ENCODE measurements at regions of chr20 and their contacts with region 1.

Region 1: GRCh38 chr20:32031007-32031958 is 20.8 kb upstream of the HCK start:
- DNase-seq: peak; percentile 87
- ATAC-seq: peak; percentile 93

Region 2: GRCh38 chr20:31859998-31860709 is 171.1 kb before region 1 on chr20:
- intact Hi-C with region 1: loop called (anchors 10 kb)
- DNase-seq: peak; percentile 66
- ATAC-seq: peak; percentile 63

Region 3: GRCh38 chr20:31870726-31871617 is 160.3 kb before region 1 on chr20:
- intact Hi-C with region 1: no loop called
- DNase-seq: no peak
- ATAC-seq: peak; percentile 9

Region 4: DNA sequence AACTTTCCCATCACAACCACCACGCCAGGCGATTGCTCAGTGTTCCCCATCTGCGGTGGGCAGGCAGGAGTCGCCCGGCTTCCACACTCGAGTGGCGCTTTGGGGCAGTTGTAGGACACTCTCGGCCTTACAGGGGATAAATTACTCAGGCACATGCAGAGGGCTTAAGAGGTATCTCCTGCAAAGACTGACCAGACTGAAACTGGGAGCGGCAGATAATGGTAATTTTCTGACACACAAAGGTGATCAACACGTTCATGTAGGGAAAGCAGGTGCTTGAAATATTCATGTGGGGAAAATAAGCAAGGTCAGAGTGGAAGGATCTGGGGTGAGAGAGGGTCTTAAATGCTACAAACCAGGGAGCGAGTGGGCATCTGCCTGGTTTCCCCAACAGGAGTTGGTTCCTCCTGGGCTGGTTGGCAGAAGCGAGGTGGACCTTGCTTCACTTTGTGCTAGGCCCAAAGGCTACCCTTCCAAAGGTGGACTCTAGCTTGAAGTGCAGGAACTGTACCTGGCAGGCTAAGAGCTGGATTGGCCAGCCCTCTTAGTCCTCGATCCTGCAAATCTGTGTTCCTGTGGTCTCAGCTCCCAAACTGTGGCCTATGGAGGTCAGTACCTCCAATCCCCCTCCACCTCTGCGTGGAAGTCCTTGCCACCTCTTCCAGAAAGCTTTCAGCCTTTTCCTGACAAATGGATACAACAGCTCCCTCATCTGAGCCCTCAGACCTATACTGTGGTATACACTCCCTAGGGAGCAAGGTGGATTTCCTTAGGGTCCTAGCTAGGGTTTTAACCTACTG is 159.5 kb after region 1 on chr20:
- intact Hi-C with region 1: no loop called
- DNase-seq: no peak
- ATAC-seq: no peak